Posterior cingulate gyrus (tissue), 11 donors: ENCODE measurements at regions of chr5 and their contacts with region 1.

Region 1: DNA sequence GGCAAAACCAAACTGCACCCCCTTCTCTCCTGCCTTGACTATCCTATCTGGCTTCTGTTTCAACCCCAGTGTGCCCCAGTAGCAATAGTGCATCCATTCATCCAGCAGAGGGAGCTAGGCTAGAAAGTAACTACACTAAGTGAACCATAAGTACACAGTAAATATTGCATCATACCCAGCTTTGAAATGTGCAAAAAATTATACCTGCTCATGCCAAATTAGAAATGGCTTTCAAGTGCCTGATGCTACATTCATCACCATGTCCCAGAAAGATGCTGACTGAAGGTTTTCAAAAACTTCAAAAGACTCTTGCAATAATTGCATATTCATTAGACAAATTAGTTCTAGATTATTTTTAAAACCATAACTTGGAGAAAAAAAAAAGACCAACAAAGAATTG is 153.5 kb downstream of the PRELID2 start:
- DNase-seq: peak in 4 of 10 donors; percentile 24 to 47 (median 30)

Region 2: GRCh38 chr5:145591578-145591977 is 90.1 kb before region 1 on chr5:
- intact Hi-C with region 1: no loop called
- DNase-seq: no peak

Region 3: GRCh38 chr5:145764325-145764724 is 82.6 kb after region 1 on chr5:
- intact Hi-C with region 1: no loop called
- DNase-seq: no peak

Region 4: DNA sequence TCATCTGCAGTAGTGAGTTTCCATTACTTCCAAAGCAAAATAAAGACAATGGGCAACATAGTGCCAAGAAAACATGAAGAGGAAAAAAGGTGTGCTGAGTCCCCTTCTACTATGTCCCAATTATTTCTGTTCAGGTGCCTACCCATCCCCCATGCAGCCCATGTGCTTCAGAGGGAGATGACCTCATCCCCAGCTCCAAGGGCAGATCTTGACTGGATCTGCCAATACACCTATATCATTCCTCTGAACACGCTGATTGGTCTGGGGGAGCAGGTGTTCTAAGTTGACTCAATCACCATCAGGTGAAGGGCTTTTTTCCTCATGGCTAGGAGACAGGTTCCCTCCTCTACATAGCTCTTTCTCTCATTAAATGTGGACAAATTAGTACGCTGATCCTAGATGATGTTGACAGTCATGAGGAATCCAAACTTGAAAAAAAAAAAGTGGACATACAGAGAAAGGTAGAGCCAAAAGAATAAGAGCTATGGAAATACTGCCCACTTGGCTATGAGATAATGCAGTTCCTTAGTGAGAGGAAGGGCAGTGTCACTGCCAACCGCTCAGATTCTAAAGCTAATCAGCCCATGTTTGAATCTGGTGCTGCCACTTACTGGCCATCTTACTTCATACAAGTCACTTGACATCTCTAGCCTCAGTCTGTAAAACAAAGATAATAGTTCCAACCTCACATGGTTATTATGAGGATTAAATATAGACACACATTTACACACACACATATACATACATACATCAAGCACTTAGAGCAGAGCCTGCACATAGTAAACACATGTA is 130.3 kb after region 1 on chr5:
- intact Hi-C with region 1: loop called (anchors 5 kb)
- DNase-seq: peak in 5 of 10 donors; percentile 25 to 85 (median 31)

Region 5: GRCh38 chr5:146049014-146049703 is 367.5 kb after region 1 on chr5:
- intact Hi-C with region 1: loop called (anchors 5 kb)
- DNase-seq: peak in 4 of 10 donors; percentile 44 to 58 (median 50)

Region 6: DNA sequence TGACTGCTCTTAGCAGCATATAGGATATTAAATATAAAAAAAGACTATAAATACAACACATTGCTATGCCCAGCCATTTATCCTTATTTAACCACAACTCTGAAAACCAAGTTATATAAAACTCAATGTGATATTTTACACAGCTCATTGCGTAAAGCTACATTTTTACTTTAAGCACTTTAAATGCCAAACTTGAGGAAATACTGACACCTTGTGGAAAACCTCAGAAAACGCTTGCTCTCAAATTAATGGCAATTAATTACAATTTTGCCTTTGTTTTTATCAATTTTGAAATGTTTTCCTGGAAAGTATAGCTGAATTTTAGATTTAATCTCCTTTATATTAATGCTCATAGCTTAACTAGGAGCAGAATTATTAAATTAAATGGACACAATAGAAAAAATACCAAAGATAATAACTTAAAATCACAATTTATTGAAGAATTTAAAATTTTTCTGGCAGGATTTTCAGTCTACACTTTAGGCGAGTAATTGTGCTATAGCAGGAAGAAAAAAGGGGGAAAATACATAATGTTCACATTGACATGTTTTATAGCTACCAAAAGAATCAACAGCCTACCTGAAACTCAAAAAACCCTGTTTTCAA is 448.9 kb after region 1 on chr5:
- intact Hi-C with region 1: loop called (anchors 5 kb)
- DNase-seq: no peak